ENCODE measurements at regions of chr9 and their contacts with region 1.

Region 1: DNA sequence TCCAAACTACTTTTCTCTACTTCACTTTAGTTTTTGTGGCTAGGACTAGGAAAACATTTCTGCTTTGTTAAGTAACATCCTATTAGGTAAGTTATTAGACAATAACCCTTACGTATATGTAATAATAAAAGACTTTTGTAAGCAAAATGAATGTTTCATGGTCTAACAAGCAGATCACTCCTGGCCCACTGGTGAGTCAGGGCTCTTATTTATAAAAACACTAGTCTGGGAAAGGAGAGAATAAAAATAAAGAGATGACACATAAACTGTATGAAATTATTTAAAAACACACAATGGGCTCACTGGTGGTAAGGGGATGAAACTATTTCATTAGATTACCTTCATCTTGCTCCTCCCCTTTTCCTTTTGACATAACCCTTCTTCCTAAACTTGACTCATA is 2212.2 kb upstream of the ACO1 start:
- DNase-seq: no peak
- ATAC-seq: no peak
- H3K4me3 ChIP-seq: no peak overlapping the region
- H3K27ac ChIP-seq: no peak overlapping the region
- H3K4me1 ChIP-seq: no peaks in the 10 kb centered on the region
- H3K27me3 ChIP-seq: no peaks in the 10 kb centered on the region
- CTCF ChIP-seq: no peak
- EP300 ChIP-seq: no peak
- POLR2A ChIP-seq: no peak
- RAD21 ChIP-seq: no peak

Region 2: DNA sequence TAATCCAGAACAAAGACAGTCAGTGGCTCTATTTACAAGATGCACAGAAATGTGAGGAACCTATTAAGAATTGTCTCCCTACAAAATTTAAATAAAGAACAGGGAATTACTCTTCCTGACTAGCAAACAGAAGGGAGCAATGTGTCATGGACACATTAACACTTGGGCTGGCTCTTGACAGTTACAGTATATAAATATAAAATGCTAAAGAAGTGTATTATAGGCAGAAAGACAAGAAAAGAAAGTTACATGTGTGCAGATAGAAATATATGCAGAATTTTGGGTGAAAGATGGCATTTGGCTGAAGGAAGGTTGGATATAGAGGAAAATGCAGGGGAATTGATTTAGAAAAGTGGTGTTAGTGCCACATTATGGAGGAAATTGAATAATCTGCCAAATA is 44.8 kb before region 1 on chr9:
- CTCF ChIA-PET with region 1: no interaction called
- POLR2A ChIA-PET with region 1: no interaction called
- in situ Hi-C with region 1: no loop called
- intact Hi-C with region 1: loop called (anchors 2 kb)
- DNase-seq: no peak
- ATAC-seq: no peak
- H3K4me3 ChIP-seq: no peak overlapping the region
- H3K27ac ChIP-seq: no peak overlapping the region
- H3K4me1 ChIP-seq: no peaks in the 10 kb centered on the region
- H3K27me3 ChIP-seq: no peaks in the 10 kb centered on the region
- CTCF ChIP-seq: no peak
- EP300 ChIP-seq: no peak
- POLR2A ChIP-seq: no peak
- RAD21 ChIP-seq: no peak